Caco-2 (cell line): ENCODE measurements at regions of chr7 and their contacts with region 1.

Region 1: GRCh38 chr7:133434055-133434865 is 181.4 kb downstream of the EXOC4 start:
- DNase-seq: peak in 1 of 2 experiments; percentile 31
- H3K4me3 ChIP-seq: no peak overlapping the region
- H3K4me3 Mint-ChIP-seq: no peak overlapping the region
- H3K27ac Mint-ChIP-seq: no peak overlapping the region
- H3K4me1 ChIP-seq: peaks cover 14% of the 10 kb centered on the region
- H3K4me1 Mint-ChIP-seq: peaks cover 17% of the 10 kb centered on the region
- H3K27me3 ChIP-seq: no peaks in the 10 kb centered on the region
- H3K27me3 Mint-ChIP-seq: no peaks in the 10 kb centered on the region
- CTCF ChIP-seq: peak; percentile 48 to 53

Region 2: DNA sequence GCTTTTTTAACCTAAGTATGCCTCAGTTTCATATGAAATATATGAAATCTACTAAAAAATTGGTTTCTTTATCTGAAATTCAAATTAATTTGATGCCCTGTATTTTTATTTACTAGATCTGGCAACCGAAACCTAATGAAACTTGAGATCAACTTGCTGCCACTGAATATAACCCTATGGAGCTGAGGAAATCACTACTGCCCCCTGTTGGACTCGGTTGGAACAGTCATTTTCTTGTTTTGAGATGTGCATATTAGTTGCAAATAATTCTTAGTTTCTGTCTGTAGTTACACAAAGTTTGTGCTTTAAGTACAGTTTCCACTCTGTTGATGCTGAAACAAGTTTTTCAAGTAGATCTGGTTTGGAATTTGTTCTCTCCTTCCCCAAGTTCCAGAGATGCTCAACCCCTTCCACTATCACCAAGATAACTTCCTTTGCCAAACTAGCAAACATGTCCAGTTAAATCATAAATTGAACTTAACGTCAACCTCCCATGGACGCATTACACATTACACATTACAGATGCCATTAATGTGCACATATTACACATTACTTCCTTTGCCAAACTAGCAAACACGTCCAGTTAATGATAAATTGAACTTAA is 203.6 kb before region 1 on chr7:
- CTCF ChIA-PET with region 1: no interaction called
- POLR2A ChIA-PET with region 1: no interaction called
- intact Hi-C with region 1: loop called (anchors 5 kb)
- DNase-seq: peak in 1 of 2 experiments; percentile 51
- H3K4me3 ChIP-seq: no peak overlapping the region
- H3K4me3 Mint-ChIP-seq: no peak overlapping the region
- H3K27ac Mint-ChIP-seq: no peak overlapping the region
- H3K4me1 ChIP-seq: no peaks in the 10 kb centered on the region
- H3K4me1 Mint-ChIP-seq: no peaks in the 10 kb centered on the region
- H3K27me3 ChIP-seq: no peaks in the 10 kb centered on the region
- H3K27me3 Mint-ChIP-seq: peaks cover 12% of the 10 kb centered on the region
- CTCF ChIP-seq: peak; percentile 39 to 61

Region 3: DNA sequence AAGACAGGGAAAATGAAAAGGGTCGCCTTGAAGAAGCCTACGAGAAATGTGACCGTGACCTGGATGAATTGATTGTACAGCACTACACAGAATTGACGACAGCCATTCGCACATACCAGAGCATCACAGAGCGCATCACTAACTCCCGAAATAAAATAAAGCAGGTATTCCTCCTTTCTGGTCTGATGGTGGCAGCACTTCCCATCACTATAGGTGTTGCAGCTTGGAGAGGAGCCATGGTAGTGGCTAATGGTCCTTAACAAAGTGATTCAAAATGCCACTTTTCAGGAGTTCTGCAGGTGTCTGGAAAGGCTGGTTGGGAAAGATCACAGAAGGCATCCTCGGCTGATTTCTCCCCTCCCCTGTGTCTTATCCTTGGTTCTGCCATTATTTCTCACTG is 159.3 kb before region 1 on chr7:
- CTCF ChIA-PET with region 1: no interaction called
- POLR2A ChIA-PET with region 1: no interaction called
- intact Hi-C with region 1: loop called (anchors 1 kb)
- DNase-seq: no peak
- H3K4me3 ChIP-seq: no peak overlapping the region
- H3K4me3 Mint-ChIP-seq: no peak overlapping the region
- H3K27ac Mint-ChIP-seq: no peak overlapping the region
- H3K4me1 ChIP-seq: no peaks in the 10 kb centered on the region
- H3K4me1 Mint-ChIP-seq: no peaks in the 10 kb centered on the region
- H3K27me3 ChIP-seq: no peaks in the 10 kb centered on the region
- H3K27me3 Mint-ChIP-seq: no peaks in the 10 kb centered on the region
- CTCF ChIP-seq: no peak

Region 4: GRCh38 chr7:133587903-133588302 is 153.6 kb after region 1 on chr7:
- CTCF ChIA-PET with region 1: no interaction called
- POLR2A ChIA-PET with region 1: no interaction called
- intact Hi-C with region 1: no loop called
- DNase-seq: no peak
- H3K4me3 ChIP-seq: no peak overlapping the region
- H3K4me3 Mint-ChIP-seq: no peak overlapping the region
- H3K27ac Mint-ChIP-seq: no peak overlapping the region
- H3K4me1 ChIP-seq: no peaks in the 10 kb centered on the region
- H3K4me1 Mint-ChIP-seq: no peaks in the 10 kb centered on the region
- H3K27me3 ChIP-seq: no peaks in the 10 kb centered on the region
- H3K27me3 Mint-ChIP-seq: no peaks in the 10 kb centered on the region
- CTCF ChIP-seq: no peak